GM10248 (cell line): ENCODE measurements at regions of chr6 and their contacts with region 1.

Region 1: DNA sequence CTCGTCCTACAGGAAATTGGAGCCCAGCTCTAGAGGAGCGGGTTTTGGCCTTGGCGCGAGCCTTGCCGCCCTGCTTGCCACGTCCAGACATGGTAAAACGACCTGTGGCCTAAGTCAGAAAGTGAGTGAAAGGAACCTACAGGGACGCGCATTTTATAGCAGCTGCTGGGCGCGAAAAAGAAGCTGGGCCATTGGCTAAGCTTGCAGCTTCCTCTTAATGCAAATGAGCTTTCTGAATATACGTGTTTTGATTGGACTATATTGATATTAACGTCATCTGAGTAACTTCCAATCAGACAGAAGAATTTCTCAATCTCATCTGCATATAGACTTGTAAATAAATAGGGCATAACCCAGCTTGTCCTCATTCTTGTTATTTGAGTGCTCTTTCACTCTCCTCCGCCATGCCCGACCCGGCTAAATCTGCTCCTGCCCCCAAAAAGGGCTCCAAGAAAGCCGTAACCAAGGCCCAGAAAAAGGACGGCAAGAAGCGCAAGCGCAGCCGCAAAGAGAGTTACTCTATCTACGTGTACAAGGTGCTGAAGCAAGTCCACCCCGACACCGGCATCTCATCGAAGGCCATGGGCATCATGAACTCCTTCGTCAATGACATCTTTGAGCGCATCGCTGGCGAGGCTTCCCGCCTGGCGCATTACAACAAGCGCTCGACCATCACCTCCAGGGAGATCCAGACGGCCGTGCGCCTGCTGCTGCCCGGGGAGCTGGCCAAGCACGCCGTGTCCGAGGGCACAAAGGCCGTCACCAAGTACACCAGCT is 18.9 kb downstream of the OR2B2 start:
- DNase-seq: peak; percentile 88
- CTCF ChIP-seq: no peak

Region 2: GRCh38 chr6:26054857-26055669 is 1838.2 kb before region 1 on chr6:
- CTCF ChIA-PET with region 1: no interaction called
- POLR2A ChIA-PET with region 1: interaction called, 10 read pairs
- DNase-seq: peak; percentile 78
- CTCF ChIP-seq: peak; percentile 23

Region 3: DNA sequence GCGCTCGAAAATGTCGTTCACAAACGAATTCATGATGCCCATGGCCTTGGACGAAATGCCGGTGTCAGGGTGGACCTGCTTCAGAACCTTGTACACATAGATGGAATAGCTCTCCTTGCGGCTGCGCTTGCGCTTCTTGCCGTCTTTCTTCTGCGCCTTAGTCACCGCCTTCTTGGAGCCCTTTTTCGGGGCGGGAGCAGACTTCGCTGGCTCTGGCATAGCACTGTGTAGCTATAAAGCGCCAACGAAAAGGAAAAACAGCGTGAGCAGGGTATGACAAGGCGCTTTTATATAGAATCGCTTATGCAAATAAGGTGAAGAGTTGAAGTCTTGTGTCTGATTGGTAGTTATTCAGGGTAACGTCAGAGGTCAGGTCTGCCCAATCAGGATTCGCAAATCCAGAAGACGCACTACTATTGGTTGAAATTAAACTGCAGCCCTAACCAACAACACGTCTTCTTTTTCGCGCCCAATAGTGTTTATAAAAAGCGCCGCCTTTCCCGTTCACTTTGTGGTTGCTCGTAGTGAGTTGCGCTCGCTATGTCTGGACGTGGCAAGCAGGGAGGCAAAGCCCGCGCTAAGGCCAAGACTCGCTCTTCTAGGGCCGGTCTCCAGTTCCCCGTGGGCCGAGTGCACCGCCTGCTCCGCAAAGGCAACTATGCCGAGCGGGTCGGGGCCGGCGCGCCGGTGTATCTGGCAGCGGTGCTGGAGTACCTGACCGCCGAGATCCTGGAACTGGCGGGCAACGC is 760.5 kb before region 1 on chr6:
- CTCF ChIA-PET with region 1: interaction called, 9 read pairs
- POLR2A ChIA-PET with region 1: interaction called, 31 read pairs
- DNase-seq: peak; percentile 95
- CTCF ChIP-seq: no peak

Region 4: DNA sequence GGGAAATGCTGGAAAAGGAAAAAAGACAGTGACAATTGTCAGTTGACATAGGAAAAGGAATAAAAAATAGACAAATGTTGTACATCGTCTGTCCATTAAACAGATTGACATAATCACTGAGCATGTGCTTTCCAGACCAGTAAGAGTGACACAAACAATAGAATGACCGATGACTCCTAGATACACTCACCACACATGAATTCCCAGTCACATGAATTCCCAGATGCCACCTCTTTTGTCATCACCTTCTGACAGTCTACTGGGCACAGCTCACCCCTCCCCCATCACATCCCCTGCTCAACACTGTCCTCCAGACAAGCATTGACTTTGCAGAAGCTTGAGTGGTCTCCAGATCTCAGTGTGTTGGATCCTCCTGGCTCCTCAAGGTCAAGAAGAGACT is 607.1 kb before region 1 on chr6:
- CTCF ChIA-PET with region 1: no interaction called
- POLR2A ChIA-PET with region 1: interaction called, 15 read pairs
- DNase-seq: no peak
- CTCF ChIP-seq: no peak

Region 5: GRCh38 chr6:27772261-27773001 is 120.8 kb before region 1 on chr6:
- CTCF ChIA-PET with region 1: interaction called, 71 read pairs
- POLR2A ChIA-PET with region 1: interaction called, 10 read pairs
- DNase-seq: peak; percentile 81
- CTCF ChIP-seq: peak; percentile 82

Region 6: GRCh38 chr6:27838058-27838944 is 54.9 kb before region 1 on chr6:
- CTCF ChIA-PET with region 1: interaction called, 53 read pairs
- POLR2A ChIA-PET with region 1: interaction called, 91 read pairs
- DNase-seq: peak; percentile 89
- CTCF ChIP-seq: no peak

Region 7: DNA sequence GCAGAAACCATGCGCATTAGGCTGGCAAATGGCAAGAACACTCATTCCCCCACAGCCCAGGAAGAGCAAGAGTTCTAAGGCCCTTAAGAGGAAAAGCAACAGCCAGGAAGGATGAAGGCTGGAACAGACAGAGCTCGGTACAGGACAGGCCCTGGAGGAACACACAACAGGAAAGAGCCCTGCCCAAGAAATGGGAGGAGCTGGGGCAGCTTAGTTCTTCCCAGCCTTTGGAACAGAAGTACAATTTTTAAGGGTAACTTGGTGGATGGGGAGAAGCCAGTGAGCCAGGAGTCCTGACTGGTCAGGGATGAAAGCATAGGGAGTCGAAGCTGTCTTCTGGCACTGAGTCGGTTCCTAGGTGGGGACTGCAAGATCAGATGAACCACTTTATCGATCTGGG is 13.4 kb before region 1 on chr6:
- CTCF ChIA-PET with region 1: interaction called, 9 read pairs
- POLR2A ChIA-PET with region 1: interaction called, 240 read pairs
- DNase-seq: no peak
- CTCF ChIP-seq: no peak

Region 8: GRCh38 chr6:28136585-28137504 is 243.6 kb after region 1 on chr6:
- CTCF ChIA-PET with region 1: no interaction called
- POLR2A ChIA-PET with region 1: no interaction called
- DNase-seq: peak; percentile 78
- CTCF ChIP-seq: no peak